ENCODE measurements at regions of chr2 and their contacts with region 1.

Region 1: DNA sequence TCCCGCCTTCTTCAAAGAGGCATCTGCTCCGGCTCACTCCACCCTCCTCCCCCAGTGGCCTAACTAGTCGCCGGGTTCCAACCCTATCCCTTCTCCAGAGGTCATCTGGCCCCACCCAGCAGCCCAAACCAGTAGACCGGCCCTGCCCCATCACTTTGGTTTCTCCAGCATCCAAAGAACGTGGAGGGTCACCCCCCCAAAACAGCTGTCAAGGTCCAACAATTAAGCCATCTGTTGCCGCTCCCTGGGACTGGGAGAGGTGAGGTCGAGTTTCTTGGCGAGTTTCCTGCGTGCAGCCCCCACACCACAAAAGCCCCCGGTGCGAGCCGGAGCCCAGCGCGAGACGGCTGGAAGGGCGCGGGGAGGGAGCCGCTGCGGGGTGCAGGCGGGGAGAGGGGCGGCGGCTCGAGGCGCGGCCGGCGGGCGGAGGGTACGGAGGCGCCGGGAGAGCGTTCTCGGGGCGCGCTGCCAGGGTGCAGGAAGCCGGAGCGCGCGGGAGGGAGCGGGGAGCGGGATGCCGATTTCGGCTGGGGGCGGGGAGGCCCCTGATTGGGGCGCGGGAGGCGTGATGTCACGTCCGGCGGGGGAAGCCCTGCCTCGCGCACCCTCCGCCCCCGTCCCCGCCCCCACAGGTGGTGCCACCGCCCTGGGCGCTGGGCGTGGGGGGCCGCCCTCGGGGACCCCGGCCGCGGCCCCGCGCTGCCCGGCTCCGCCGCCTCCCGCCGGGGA is 571 bp upstream of the GPC1 start:
- DNase-seq: peak; percentile 95 to 98 (median 98)
- ATAC-seq: peak; percentile 81 to 89
- H3K4me3 ChIP-seq: peak overlapping the region; percentile 76
- H3K27ac ChIP-seq: peak overlapping the region; percentile 51
- H3K4me1 ChIP-seq: no peaks in the 10 kb centered on the region
- H3K27me3 ChIP-seq: no peaks in the 10 kb centered on the region

Region 2: DNA sequence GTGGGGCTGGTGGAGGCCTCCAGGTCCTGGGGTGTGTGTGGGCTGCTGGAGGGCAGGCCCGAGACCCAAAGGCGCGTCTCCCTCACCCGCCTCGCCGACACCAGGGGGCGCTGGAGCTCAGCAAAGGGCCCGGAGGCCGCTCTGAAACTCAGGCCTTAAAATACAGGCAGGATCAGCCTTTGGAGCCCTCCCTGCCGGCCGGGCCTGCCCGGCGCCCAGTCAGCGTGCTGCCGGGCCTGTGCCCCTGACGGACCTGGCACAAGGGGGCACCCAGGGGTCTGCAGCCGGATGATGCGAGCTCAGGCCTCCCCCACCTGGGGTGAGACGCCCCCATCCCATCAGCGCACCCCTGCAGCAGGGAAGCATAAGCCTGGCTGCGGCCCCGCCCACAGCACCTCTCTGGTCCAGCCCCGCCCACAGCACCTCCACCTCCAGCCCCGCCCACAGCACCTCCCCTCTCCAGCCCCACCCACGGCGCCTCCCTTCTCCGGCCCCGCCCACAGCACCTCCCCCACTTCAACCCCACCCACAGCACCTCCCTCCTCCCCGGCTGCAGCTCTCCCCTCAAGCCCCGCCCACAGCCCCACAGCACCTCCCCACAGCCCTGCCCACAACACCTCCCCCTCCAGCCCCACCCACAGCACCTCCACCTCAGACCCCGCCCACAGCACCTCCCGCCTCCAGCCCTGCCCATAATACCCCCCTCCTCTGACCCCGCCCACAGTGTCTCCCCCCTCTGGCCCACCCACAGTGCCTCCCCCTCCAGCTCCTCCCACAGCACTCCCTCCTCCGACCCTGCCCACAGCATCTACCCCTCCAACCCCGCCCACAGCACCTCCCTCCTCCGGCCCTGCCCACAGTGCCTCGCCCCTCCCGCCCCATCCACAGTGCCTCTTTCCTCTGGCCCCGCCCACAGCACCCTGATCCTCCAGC is 201.7 kb before region 1 on chr2:
- intact Hi-C with region 1: loop called (anchors 1 to 2 kb)
- DNase-seq: peak; percentile 86 to 94 (median 94)
- ATAC-seq: peak; percentile 82 to 83
- H3K4me3 ChIP-seq: no peak overlapping the region
- H3K27ac ChIP-seq: peak overlapping the region; percentile 78
- H3K4me1 ChIP-seq: peaks cover 3% of the 10 kb centered on the region
- H3K27me3 ChIP-seq: no peaks in the 10 kb centered on the region

Region 3: DNA sequence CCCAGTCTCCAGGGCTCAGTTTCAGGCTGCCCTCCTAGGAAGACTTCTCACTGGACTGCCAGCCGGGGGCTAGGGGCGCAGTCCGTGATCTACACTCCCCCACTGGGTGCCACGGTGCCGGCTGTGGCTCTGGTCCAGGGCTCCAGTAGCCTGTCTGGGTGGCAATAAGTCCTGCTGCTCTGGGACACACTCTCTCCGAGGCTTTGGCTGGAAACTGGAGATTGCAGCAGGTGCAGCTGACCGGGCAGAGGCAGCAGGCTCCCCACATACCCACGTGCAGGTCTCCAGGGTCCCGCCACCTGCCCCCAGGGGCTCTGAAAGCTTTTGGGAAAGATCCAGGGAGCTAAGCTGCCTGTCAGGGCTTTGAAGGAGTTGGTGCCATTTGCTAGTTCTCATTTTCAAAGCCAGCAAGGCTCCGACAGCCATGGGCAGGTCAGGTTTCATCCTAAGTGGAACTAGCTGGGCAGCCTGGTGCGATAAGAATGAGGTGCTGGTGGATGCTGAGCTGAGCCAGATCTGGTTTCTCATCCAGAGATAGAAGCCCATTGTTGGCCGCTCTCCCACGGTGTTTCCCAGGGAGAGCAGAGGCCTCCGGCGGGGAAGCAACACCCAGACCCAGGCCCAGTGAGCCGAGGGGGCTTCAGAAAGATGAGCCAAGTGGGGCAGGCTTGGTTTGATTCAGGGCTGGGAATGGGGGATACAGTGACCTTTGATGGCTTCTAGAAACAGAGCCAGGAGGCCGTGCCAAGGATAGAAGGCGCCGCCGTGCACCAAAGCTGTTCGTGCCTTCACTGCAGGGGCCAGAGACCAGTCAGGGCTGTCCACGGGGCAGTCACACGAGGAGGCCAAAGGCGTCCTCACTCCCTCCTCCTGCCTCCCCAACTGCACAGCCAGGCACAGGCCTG is 141.1 kb before region 1 on chr2:
- intact Hi-C with region 1: loop called in 1 of 4 experiments (anchors 10 kb)
- DNase-seq: peak; percentile 47 to 76 (median 76)
- ATAC-seq: peak; percentile 41 to 65
- H3K4me3 ChIP-seq: no peak overlapping the region
- H3K27ac ChIP-seq: peak overlapping the region; percentile 58
- H3K4me1 ChIP-seq: peaks cover 3% of the 10 kb centered on the region
- H3K27me3 ChIP-seq: no peaks in the 10 kb centered on the region

Region 4: DNA sequence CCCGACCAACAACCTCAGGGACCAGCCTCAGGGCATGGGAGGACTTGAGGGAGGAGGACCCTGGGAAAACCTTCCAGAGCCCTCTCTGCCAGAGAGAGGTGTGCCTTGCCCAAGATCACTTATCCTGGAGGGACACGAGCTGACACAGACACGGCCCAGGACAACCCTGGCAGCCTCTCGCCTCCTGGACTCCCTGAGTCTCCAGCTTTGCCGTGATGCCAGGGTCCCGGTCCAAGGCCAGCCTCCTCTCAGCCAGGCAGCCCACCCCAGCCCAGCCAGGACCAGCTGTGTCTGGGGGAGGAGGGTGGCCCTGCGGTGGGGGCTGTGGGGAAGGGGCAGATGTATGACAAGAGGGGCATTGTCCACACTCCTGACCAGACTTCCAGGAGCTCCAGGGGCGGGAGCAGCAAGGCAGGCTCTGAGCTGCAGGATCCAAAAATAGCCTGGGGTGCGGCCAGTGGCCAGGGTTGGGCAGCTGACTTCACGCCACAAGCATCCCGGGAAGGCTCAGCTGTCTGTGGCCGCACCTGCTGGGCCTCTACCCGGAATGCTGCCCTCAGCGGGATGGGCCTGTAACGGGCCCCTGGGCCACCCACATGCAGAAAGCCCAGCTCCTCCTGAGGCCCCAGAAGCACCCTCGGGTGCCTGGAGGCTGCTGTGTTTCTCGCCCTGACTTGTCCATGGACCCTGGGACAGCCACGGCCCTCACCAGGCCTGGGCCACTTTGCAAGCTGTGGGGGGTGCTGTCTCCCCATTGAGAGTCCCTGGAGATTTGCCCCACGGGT is 64.9 kb before region 1 on chr2:
- intact Hi-C with region 1: loop called in 2 of 4 experiments (anchors 5 to 10 kb)
- DNase-seq: peak; percentile 72 to 91 (median 86)
- ATAC-seq: peak; percentile 72 to 79
- H3K4me3 ChIP-seq: no peak overlapping the region
- H3K27ac ChIP-seq: peak overlapping the region; percentile 93
- H3K4me1 ChIP-seq: peaks cover 8% of the 10 kb centered on the region
- H3K27me3 ChIP-seq: no peaks in the 10 kb centered on the region